ENCODE measurements at regions of chr7 and their contacts with region 1.

Region 1: DNA sequence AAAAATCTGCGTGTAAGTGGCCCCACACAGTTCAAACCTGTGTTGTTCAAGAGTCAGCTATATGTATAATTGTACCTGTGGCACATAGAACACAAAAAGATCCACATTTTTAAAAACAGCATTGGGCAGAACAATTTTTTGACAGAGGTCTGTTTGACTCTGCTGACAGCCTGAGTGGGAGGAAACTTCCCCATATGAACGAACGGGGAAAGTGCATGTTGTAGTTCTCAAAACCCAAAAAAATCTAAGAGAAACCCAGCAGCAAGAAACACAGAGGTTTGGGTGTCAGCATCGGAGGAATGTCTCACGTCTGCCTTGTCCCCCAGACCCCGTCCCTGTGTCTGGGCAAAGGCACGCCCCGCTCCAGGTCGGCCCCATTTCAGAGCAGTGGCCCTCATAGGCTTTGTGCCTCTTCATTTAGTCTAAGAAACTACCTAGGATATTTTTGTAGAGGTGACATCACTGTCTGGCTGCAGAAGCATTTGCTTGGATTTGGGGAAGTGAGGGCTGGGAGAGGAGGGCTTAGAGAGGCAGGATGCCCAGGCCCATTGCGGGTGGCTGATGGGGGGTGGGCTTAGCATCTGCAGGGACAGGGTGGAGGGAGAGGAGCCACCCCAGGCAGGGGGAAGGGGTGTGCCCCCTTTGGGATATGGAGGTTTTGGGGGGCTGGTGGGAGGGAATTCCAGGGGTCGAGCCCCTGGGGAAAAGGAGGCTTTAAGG is 11.0 kb downstream of the CUX1 start:
- DNase-seq: peak in 1 of 3 donors; percentile 25
- H3K4me3 ChIP-seq: no peak overlapping the region
- H3K27ac ChIP-seq: no peak overlapping the region
- H3K4me1 ChIP-seq: peaks cover 0 to 16% (median 5%) of the 10 kb centered on the region in 4 experiments
- H3K27me3 ChIP-seq: no peaks in the 10 kb centered on the region

Region 2: DNA sequence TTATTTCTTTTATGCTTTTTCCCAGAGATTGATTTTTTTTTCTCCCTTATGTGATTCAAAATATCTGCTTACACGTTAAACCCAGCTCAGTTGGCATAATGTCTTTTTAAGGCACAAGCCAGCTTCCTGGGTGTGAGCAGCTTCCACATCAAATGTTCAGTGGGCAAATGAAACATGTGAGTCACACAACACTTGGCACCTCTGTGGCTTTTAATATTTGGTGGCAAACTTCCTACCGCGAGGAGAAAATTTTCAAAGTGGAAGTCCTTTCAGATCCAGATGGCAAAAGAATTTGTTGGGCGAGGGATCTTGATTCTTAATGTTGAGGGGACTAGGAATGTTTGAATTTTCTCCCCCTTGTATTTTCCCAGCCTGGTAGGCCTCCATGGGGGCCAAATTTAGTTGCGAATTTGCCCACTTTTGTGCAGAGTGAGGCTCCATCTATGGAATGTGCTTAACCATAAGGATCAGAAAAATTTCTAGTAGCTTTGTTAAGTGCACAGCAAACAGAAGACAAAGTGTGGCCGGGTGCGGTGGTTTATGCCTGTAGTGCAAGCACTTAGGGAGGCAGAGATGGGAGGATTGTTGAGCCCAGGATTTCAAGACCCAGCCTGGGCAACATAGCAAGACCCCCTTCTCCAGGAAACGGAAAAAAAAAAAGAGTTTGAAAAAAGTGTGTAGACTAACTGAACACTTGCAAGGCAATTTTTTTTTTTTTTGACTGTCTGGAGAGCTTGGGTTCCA is 19.9 kb after region 1 on chr7:
- CTCF ChIA-PET with region 1: interaction called, 12 read pairs
- POLR2A ChIA-PET with region 1: no interaction called
- DNase-seq: no peak
- H3K4me3 ChIP-seq: no peak overlapping the region
- H3K27ac ChIP-seq: no peak overlapping the region
- H3K4me1 ChIP-seq: peaks cover 0 to under 1% (median 0%) of the 10 kb centered on the region in 4 experiments
- H3K27me3 ChIP-seq: no peaks in the 10 kb centered on the region

Region 3: GRCh38 chr7:101856473-101857357 is 28.3 kb after region 1 on chr7:
- CTCF ChIA-PET with region 1: interaction called, 13 read pairs
- POLR2A ChIA-PET with region 1: interaction called, 3 read pairs
- DNase-seq: peak; percentile 98 to 100 (median 99)
- H3K4me3 ChIP-seq: peak overlapping the region; percentile 13 to 78 (median 62)
- H3K27ac ChIP-seq: peak overlapping the region; percentile 86 to 93
- H3K4me1 ChIP-seq: peaks cover 23 to 74% (median 68%) of the 10 kb centered on the region in 4 experiments
- H3K27me3 ChIP-seq: no peaks in the 10 kb centered on the region

Measured in common myeloid progenitor, CD34-positive (primary cell).